Activated B cell treated with CpG ODN at 0.5 μM for 24 hours (primary cell): ENCODE measurements at regions of chr7 and their contacts with region 1.

Region 1: GRCh38 chr7:129009437-129009836 is 45.5 kb downstream of the TNPO3 start:
- DNase-seq: no peak
- ATAC-seq: peak; percentile 86
- H3K4me3 Mint-ChIP-seq: peak overlapping the region; percentile 17
- H3K27ac Mint-ChIP-seq: peak overlapping the region; percentile 82
- H3K4me1 Mint-ChIP-seq: peaks cover 43% of the 10 kb centered on the region
- H3K27me3 Mint-ChIP-seq: no peaks in the 10 kb centered on the region
- CTCF ChIP-seq: no peak

Region 2: GRCh38 chr7:129144095-129144833 is 134.8 kb after region 1 on chr7 and contains the start of gene TSPAN33:
- CTCF ChIA-PET with region 1: no interaction called
- POLR2A ChIA-PET with region 1: interaction called, 5 read pairs
- intact Hi-C with region 1: loop called (anchors 5 kb)
- DNase-seq: peak; percentile 75
- ATAC-seq: peak; percentile 62
- H3K4me3 Mint-ChIP-seq: peak within 1 kb of the TSS; percentile 98
- H3K27ac Mint-ChIP-seq: peak within 1 kb of the TSS; percentile 99
- H3K4me1 Mint-ChIP-seq: peaks cover 48% of the 10 kb centered on the region
- H3K27me3 Mint-ChIP-seq: no peaks in the 10 kb centered on the region
- CTCF ChIP-seq: no peak
- total RNA-seq, gene TSPAN33: 332 and 341 TPM in 2 replicates